ENCODE measurements at regions of chrX and their contacts with region 1.

Region 1: DNA sequence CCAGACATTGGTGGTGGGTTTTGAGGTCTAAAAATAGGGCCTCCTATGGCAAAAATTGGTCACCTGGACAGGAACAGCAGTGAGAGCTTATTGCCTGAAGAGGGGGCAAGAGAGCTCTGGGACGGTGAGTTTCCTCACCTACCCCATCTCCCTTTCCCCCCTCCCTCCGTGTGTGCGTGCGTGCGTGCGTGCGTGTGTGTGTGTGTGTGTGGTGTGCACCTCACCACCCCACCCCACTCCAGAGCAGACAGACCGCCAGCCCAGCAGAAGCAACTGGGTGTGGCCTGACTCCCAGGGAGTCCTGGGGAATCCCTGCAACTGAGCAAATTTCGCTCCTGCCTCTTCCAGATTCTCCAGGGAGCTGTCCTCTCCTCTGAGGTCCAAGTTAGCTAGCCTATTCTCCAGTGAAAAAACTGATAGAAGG is 44.7 kb downstream of the PRPS1 start:
- DNase-seq: peak; percentile 58
- H3K4me3 ChIP-seq: no peak overlapping the region
- H3K27ac ChIP-seq: peak overlapping the region; percentile 89
- H3K4me1 ChIP-seq: no peaks in the 10 kb centered on the region
- H3K27me3 ChIP-seq: no peaks in the 10 kb centered on the region
- CTCF ChIP-seq: peak; percentile 44 to 85 (median 70)
- POLR2A ChIP-seq: no peak

Region 2: GRCh38 chrX:107716816-107717700 is 44.1 kb after region 1 on chrX:
- intact Hi-C with region 1: loop called (anchors 1 kb)
- DNase-seq: peak; percentile 87
- H3K4me3 ChIP-seq: peak overlapping the region; percentile 64 to 71
- H3K27ac ChIP-seq: peak overlapping the region; percentile 98
- H3K4me1 ChIP-seq: no peaks in the 10 kb centered on the region
- H3K27me3 ChIP-seq: no peaks in the 10 kb centered on the region
- CTCF ChIP-seq: peak in 1 of 4 experiments; percentile 18
- POLR2A ChIP-seq: peak; percentile 94

Measured in prostate gland (tissue), 2 donors.